Astrocyte of the cerebellum (primary cell): ENCODE measurements at regions of chr14 and their contacts with region 1.

Region 1: GRCh38 chr14:42750769-42751316 is 1144.2 kb downstream of the LRFN5 start:
- DNase-seq: no peak
- H3K4me3 ChIP-seq: no peak overlapping the region
- CTCF ChIP-seq: no peak

Region 2: DNA sequence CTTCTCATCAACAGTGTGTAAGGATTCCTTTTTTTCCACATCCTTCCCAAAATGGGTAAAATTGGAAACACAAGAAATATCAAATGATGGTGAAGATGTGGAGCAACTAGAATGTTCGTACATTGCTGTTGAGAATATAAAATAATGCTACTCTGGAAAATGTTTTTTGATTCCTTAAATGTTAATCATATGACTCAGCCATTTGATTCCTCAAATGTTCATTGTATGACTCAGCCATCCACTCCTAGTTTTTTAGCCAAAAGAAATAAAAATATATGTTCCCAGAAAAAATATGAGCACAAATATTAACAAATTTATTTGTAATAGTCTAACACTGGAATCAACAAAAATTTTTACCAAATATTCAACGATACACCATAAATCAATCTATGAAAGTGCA is 35.5 kb before region 1 on chr14:
- in situ Hi-C with region 1: loop called (anchors 5 kb)
- DNase-seq: no peak
- H3K4me3 ChIP-seq: no peak overlapping the region
- CTCF ChIP-seq: no peak

Region 3: DNA sequence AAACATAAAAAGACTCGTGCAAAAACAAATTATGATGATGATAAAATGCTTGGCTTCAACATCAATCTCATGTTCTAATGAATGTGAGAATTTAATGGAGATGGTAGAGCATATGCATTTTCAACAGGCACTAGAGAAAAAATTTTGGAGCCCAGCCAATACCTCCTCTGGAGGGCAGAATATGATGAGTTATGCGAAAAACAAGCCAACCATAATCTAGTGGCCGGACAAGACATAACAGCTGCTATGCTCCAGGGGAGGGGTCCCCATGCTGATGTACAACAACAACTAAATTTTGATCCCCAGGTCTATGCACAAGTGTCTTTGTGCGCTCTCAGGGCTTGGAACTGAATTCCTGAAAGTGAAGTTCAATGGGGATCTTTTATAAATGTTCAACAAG is 53.3 kb after region 1 on chr14:
- in situ Hi-C with region 1: no loop called
- DNase-seq: no peak
- H3K4me3 ChIP-seq: no peak overlapping the region
- CTCF ChIP-seq: no peak

Region 4: GRCh38 chr14:42814817-42815216 is 64.0 kb after region 1 on chr14:
- in situ Hi-C with region 1: no loop called
- DNase-seq: no peak
- H3K4me3 ChIP-seq: no peak overlapping the region
- CTCF ChIP-seq: no peak